Heart right ventricle (tissue), 16 donors: ENCODE measurements at regions of chr9 and their contacts with region 1.

Region 1: DNA sequence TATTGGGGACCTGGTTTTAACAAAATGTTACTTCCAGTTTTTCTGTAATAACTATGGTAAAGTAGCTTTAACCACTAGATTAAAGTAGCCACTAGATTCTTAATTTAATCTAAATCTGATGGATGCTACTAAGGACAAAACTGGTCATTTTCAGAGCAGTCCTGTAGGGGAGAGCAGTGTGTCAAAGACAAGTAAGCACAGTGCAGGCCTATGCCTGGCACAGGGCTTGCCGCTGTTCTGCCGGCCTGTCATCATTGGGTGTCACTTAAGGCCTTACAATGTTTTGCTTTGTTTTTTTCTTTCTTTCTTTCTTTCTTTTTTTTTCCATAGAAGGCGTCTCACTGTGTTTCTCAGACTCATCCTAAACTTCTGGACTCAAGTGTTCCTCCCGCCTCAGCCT is 53.0 kb upstream of the NXNL2 start:
- DNase-seq: no peak
- ATAC-seq: no peak
- H3K4me3 ChIP-seq: no peak overlapping the region
- H3K27ac ChIP-seq: no peak overlapping the region
- H3K4me1 ChIP-seq: peaks cover 0 to 14% (median 9%) of the 10 kb centered on the region in 9 donors
- H3K27me3 ChIP-seq: no peaks in the 10 kb centered on the region
- CTCF ChIP-seq: no peak

Region 2: DNA sequence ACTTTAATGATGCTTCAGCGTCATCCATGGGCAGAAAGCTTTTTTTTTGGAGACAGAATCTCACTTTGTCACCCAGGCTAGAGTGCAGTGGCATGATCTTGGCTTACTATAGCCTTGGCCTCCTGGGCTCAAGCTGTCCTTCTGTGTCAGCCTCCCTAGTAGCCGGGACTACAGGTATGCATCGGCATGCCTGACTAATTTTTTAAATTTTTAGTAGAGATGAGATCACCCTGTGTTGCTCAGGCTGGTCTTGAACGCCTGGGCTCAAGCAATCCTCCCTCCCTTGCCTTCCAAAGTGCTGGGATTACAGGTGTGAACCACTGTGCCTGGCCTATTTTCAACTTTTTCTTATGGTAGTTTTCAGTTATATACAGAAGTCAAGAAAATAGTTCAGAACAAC is 70.5 kb before region 1 on chr9:
- intact Hi-C with region 1: no loop called
- DNase-seq: no peak
- ATAC-seq: no peak
- H3K4me3 ChIP-seq: no peak overlapping the region
- H3K27ac ChIP-seq: no peak overlapping the region
- H3K4me1 ChIP-seq: no peaks in the 10 kb centered on the region
- H3K27me3 ChIP-seq: no peaks in the 10 kb centered on the region
- CTCF ChIP-seq: no peak

Region 3: DNA sequence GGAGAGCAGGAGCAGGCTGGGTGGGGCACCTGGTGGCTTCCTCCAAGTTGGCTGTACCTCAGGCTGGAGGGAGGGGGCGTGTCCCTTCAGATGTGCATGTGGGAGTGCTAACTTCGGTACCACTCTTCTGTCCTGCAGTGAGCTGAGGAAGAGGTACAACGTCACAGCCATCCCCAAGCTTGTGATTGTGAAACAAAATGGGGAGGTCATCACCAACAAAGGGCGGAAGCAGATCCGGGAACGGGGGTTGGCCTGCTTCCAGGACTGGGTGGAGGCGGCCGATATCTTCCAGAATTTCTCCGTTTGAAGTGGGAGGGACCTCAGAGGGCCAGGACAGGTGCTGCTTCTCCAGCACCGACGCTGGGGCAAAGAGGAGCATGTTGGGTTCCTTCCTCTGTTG is 62.3 kb after region 1 on chr9:
- intact Hi-C with region 1: loop called in 1 of 10 experiments (anchors 10 kb)
- DNase-seq: peak in 1 of 2 donors; percentile 32
- ATAC-seq: peak in 6 of 8 donors; percentile 20 to 85 (median 43)
- H3K4me3 ChIP-seq: no peak overlapping the region
- H3K27ac ChIP-seq: no peak overlapping the region
- H3K4me1 ChIP-seq: peaks cover 0 to 5% (median 0%) of the 10 kb centered on the region in 9 donors
- H3K27me3 ChIP-seq: peaks cover 0 to 15% (median 0%) of the 10 kb centered on the region in 7 donors
- CTCF ChIP-seq: no peak